ENCODE measurements at regions of chr1 and their contacts with region 1.

Region 1: DNA sequence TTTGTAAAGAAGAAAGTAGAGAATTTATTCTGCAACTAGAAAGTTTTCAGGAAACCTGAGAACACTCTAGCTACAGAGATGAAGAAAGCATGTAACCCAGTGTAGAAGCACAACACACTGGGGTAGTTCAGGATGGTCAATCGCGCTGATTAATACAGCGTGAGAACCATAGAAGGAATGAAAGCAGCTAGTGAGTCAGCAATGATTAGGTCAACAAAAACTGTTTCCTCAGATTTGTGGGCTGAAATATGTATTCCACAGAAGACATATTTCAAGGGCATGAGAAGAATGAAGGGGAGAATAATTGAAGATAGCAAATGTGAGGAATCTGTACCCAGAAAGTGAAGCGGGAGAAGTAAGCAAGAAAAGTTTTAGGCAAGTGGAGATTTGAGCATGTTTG is 97.8 kb upstream of the ADGRL2 start:
- DNase-seq: peak; percentile 96
- H3K4me3 ChIP-seq: peak overlapping the region in 1 of 3 experiments; percentile 23
- H3K27ac ChIP-seq: peak overlapping the region; percentile 100
- H3K4me1 ChIP-seq: peaks cover 42% of the 10 kb centered on the region
- H3K27me3 ChIP-seq: no peaks in the 10 kb centered on the region
- CTCF ChIP-seq: no peak
- POLR2A ChIP-seq: no peak

Region 2: DNA sequence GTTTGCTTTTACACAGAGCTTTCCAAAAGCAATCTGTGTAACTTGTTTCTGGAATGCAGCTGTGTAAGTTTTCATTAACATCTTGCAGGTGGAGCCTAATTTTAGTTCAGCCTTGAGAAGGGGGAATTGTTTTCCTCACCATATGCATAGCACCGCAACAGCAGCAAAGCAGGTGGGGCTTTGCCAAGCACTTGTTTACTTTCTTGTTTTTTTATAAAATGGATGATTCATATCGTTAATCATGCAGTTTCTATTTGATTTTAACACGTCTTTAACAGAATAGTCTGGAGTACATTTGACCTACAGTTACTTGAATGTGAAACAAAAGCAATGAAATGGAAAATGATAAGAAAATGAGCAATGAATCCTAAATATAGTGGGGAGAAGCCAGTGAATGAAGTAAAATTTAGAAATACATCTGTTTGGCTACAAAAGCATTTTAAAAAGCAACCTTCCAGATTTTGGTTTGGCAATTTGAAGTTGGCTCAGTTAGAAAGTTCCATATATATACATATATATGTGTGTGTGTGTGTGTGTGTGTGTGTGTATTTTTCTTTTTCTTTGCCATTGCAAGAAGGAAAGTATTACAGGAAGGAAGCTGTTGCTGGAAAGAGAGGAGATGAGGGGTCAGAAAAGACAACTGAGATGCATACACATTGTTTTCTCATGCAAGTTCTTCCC is 21.2 kb before region 1 on chr1:
- CTCF ChIA-PET with region 1: interaction called, 4 read pairs
- POLR2A ChIA-PET with region 1: no interaction called
- dilution Hi-C with region 1: no loop called
- intact Hi-C with region 1: loop called (anchors 1 kb)
- DNase-seq: peak; percentile 92
- H3K4me3 ChIP-seq: peak overlapping the region in 1 of 3 experiments; percentile 34
- H3K27ac ChIP-seq: peak overlapping the region; percentile 50
- H3K4me1 ChIP-seq: peaks cover 24% of the 10 kb centered on the region
- H3K27me3 ChIP-seq: no peaks in the 10 kb centered on the region
- CTCF ChIP-seq: no peak
- POLR2A ChIP-seq: no peak

Region 3: GRCh38 chr1:81731989-81732388 is 29.1 kb after region 1 on chr1:
- CTCF ChIA-PET with region 1: interaction called, 5 read pairs
- POLR2A ChIA-PET with region 1: no interaction called
- dilution Hi-C with region 1: no loop called
- intact Hi-C with region 1: loop called (anchors 1 kb)
- DNase-seq: peak; percentile 70
- H3K4me3 ChIP-seq: no peak overlapping the region
- H3K27ac ChIP-seq: peak overlapping the region; percentile 46
- H3K4me1 ChIP-seq: peaks cover 13% of the 10 kb centered on the region
- H3K27me3 ChIP-seq: no peaks in the 10 kb centered on the region
- CTCF ChIP-seq: no peak
- POLR2A ChIP-seq: no peak

Region 4: DNA sequence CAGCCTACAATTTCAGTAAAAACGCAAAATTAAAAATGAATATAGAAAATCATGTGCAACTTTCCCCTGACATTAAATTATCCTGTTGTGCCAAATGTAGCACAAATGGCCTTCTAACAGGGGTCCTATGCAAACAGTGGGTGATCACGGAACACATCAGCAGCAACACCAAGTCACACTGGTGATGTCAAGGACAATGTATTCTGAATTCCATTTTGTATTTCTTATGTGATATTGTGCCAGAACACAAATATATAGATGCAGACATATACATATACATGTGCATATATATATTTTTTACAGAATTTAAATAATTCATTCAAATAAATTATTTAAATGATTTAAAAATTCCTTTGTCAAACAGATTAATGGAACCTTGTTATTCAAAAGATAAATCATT is 89.3 kb after region 1 on chr1:
- CTCF ChIA-PET with region 1: no interaction called
- POLR2A ChIA-PET with region 1: interaction called, 10 read pairs
- dilution Hi-C with region 1: no loop called
- intact Hi-C with region 1: no loop called
- DNase-seq: no peak
- H3K4me3 ChIP-seq: no peak overlapping the region
- H3K27ac ChIP-seq: no peak overlapping the region
- H3K4me1 ChIP-seq: no peaks in the 10 kb centered on the region
- H3K27me3 ChIP-seq: no peaks in the 10 kb centered on the region
- CTCF ChIP-seq: no peak
- POLR2A ChIP-seq: no peak

Region 5: GRCh38 chr1:81834921-81835698 is 132.2 kb after region 1 on chr1:
- CTCF ChIA-PET with region 1: no interaction called
- POLR2A ChIA-PET with region 1: no interaction called
- dilution Hi-C with region 1: no loop called
- intact Hi-C with region 1: loop called (anchors 1 kb)
- DNase-seq: peak; percentile 91
- H3K4me3 ChIP-seq: no peak overlapping the region
- H3K27ac ChIP-seq: no peak overlapping the region
- H3K4me1 ChIP-seq: peaks cover 15% of the 10 kb centered on the region
- H3K27me3 ChIP-seq: no peaks in the 10 kb centered on the region
- CTCF ChIP-seq: no peak
- POLR2A ChIP-seq: peak; percentile 46

Region 6: GRCh38 chr1:81876901-81877733 is 174.2 kb after region 1 on chr1:
- CTCF ChIA-PET with region 1: no interaction called
- POLR2A ChIA-PET with region 1: no interaction called
- dilution Hi-C with region 1: no loop called
- intact Hi-C with region 1: loop called (anchors 5 kb)
- DNase-seq: peak; percentile 83
- H3K4me3 ChIP-seq: no peak overlapping the region
- H3K27ac ChIP-seq: peak overlapping the region; percentile 58
- H3K4me1 ChIP-seq: peaks cover 34% of the 10 kb centered on the region
- H3K27me3 ChIP-seq: no peaks in the 10 kb centered on the region
- CTCF ChIP-seq: no peak
- POLR2A ChIP-seq: no peak